ENCODE measurements at regions of chr1 and their contacts with region 1.

Region 1: DNA sequence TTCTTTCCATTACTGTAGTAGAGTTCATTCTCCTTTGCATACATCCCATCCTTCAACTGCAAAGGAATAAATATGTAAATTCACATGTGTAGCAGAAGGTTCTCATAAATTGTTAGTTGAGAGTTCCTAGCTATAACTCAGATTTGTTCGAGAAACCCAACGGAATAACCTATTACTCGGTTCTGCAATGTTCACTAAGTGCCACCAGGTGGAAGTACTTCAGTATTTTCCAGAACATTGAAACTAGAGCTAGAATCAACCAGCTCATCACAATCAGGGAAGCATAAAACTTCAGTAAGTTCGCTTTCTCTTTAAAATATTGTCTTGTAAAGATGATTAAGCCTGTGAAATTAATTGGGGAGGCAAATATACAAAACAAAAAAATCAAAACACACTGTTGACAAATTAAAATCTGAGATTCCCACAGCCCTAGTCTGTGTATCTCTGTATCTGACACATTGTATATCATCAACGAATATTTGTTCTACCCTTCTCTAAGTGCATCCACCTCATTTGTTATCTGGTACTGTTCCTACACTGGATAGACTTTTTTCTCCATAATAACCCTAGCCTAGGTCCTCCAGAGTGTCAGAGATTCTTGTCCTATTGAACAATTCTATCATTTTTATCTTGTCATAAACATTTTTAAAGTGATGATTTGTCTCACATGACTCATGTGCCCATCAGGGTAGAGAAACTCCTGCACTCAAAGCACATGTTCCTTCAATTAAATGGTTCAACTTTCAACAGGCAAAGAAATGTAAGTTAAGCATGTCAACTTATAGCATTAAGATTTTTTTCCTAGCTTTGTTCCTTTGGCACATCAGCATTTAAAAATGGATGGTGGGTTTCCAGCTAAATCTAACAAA is 31.9 kb downstream of the MROH9 start:
- DNase-seq: no peak
- H3K4me3 ChIP-seq: no peak overlapping the region
- H3K27ac ChIP-seq: no peak overlapping the region
- H3K4me1 ChIP-seq: no peaks in the 10 kb centered on the region
- H3K27me3 ChIP-seq: 0 out of 2 replicates have a peak, but pooled peaks cover 4% of the 10 kb centered on the region
- CTCF ChIP-seq: peak; percentile 65

Region 2: GRCh38 chr1:171226747-171227370 is 259.6 kb after region 1 on chr1:
- CTCF ChIA-PET with region 1: no interaction called
- POLR2A ChIA-PET with region 1: no interaction called
- intact Hi-C with region 1: loop called (anchors 2 kb)
- DNase-seq: no peak
- H3K4me3 ChIP-seq: no peak overlapping the region
- H3K27ac ChIP-seq: no peak overlapping the region
- H3K4me1 ChIP-seq: no peaks in the 10 kb centered on the region
- H3K27me3 ChIP-seq: no peaks in the 10 kb centered on the region
- CTCF ChIP-seq: peak; percentile 65

Region 3: DNA sequence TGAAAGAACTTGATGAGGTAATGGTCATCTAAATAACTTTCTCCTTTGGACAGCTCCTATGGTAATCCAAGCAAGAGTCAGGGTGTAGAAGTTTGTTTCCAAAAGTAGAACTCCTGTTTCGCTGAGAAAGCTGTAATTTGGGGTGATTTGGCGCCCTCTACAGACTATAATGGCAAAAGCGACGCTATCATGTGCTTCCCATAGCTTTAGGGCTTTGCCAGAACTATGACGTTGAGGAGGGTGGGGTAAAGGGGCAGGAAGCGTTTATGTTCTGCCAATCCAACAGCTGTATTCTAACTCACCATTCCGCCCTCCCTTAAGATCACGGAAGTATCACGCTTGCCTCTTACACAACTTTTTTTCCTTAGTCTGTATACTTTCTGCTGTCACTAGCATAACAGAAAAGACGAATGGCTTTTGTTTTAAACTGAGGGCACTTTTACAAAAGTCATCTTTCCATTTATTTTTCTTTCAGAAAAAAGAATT is 346.6 kb after region 1 on chr1 and contains the start of gene FMO4:
- CTCF ChIA-PET with region 1: interaction called, 10 read pairs
- POLR2A ChIA-PET with region 1: no interaction called
- intact Hi-C with region 1: no loop called
- DNase-seq: peak; percentile 62 to 85
- H3K4me3 ChIP-seq: peak within 1 kb of the TSS; percentile 7; the same call in 1 of the 2 replicates
- H3K27ac ChIP-seq: no peak within 1 kb of the TSS
- H3K4me1 ChIP-seq: no peaks in the 10 kb centered on the region
- H3K27me3 ChIP-seq: peaks cover 8% of the 10 kb centered on the region; the same call in 1 of the 2 replicates
- CTCF ChIP-seq: peak; percentile 73
- total RNA-seq, gene FMO4: 0.28 and 0.61 TPM in 2 replicates